ENCODE measurements at regions of chr11 and their contacts with region 1.

Region 1: DNA sequence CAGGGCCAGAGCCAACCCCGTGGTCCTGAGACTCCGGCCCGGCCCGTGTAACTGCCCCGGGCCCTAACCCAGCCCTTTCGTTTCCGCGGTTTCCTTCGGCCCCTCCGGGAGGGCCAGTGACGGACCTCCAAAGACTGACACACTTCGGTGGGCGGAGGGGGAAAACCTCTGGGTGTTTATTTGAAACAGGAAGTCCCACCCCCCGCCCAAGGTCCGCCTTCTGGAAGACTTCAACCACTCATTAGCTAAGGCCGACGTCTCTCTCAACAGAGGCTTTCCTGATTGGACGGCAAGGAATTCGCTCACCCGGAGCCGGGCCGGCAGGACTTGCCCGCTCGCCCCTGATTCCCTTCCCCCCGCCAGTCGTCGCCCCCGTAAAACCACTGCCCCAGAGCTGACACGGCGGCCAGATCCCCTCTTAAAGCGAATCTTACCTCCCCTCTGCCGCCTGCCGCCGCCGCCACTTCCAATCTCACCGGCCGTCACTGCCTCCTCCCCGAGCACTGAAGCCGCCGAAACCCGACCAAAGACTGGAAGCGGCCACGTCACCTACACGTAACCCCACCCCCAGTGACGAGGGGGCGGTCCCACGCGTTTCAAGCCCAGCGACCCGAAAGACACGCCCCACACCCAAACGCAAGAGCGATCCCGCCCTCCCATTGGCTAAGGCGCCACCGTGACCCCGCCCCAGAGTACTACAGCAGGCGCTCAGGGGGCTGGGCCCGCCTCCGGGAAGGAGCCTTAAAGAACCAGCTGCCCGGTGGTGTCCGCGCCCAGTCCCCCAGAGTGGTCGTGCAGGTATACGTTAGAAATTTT is at the start of gene STX5:
- DNase-seq: peak; percentile 94 to 99 (median 96)
- ATAC-seq: peak; percentile 94
- H3K4me3 ChIP-seq: peak within 1 kb of the TSS; percentile 94
- H3K27ac ChIP-seq: peak within 1 kb of the TSS; percentile 98
- H3K4me1 ChIP-seq: peaks cover 7 to 17% of the 10 kb centered on the region in 2 experiments; a peak in 4 of 5 replicates
- H3K27me3 ChIP-seq: no peaks in the 10 kb centered on the region
- CTCF ChIP-seq: no peak
- EP300 ChIP-seq: no peak
- POLR2A ChIP-seq: peak; percentile 92
- RAD21 ChIP-seq: no peak
- polyA plus RNA-seq, gene STX5: 2.8 to 3.6 TPM

Region 2: DNA sequence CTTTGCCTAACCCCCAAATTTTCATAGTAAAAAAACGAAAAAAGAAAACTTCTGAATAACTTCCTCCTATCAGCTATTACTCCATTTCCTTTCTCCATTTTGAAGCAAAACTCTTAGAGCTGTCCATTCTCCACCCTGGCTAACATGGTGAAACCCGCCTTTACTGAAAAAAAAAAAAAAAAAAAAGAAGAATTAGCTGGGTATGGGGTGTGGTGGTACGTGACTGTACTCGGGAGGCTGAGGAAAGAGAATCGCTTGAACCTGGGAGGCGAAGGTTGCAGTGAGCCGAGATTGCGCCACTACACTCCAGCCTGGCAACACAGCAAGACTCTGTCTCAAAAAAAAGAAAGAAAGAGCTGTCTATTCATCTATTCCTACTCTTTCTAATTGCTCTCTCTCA is 15.2 kb before region 1 on chr11:
- CTCF ChIA-PET with region 1: no interaction called
- POLR2A ChIA-PET with region 1: interaction called, 16 read pairs
- in situ Hi-C with region 1: no loop called
- intact Hi-C with region 1: no loop called
- DNase-seq: no peak
- ATAC-seq: no peak
- H3K4me3 ChIP-seq: no peak overlapping the region
- H3K27ac ChIP-seq: no peak overlapping the region
- H3K4me1 ChIP-seq: no peaks in the 10 kb centered on the region; a peak in 2 of 5 replicates
- H3K27me3 ChIP-seq: no peaks in the 10 kb centered on the region
- CTCF ChIP-seq: no peak
- EP300 ChIP-seq: no peak
- POLR2A ChIP-seq: no peak
- RAD21 ChIP-seq: no peak

Region 3: DNA sequence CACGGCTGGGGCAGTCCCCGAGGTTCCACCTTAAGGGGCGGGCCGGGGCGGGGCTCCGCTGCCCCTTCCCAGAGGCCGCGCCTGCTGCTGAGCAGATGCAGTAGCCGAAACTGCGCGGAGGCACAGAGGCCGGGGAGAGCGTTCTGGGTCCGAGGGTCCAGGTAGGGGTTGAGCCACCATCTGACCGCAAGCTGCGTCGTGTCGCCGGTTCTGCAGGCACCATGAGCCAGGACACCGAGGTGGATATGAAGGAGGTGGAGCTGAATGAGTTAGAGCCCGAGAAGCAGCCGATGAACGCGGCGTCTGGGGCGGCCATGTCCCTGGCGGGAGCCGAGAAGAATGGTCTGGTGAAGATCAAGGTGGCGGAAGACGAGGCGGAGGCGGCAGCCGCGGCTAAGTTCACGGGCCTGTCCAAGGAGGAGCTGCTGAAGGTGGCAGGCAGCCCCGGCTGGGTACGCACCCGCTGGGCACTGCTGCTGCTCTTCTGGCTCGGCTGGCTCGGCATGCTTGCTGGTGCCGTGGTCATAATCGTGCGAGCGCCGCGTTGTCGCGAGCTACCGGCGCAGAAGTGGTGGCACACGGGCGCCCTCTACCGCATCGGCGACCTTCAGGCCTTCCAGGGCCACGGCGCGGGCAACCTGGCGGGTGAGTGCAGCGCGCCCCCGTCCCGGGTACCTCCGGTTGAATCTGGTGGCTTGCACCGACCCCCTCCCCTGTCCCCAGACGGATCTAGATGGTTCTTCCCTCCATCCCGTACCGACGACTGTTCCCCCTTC is 49.3 kb after region 1 on chr11 and contains the start of gene SLC3A2:
- CTCF ChIA-PET with region 1: no interaction called
- POLR2A ChIA-PET with region 1: interaction called, 10 read pairs
- in situ Hi-C with region 1: no loop called
- intact Hi-C with region 1: no loop called
- DNase-seq: peak; percentile 83 to 95 (median 86)
- ATAC-seq: peak; percentile 88
- H3K4me3 ChIP-seq: peak within 1 kb of the TSS; percentile 56
- H3K27ac ChIP-seq: peak within 1 kb of the TSS; percentile 95
- H3K4me1 ChIP-seq: peaks cover 56 to 58% of the 10 kb centered on the region in 2 experiments
- H3K27me3 ChIP-seq: no peaks in the 10 kb centered on the region
- CTCF ChIP-seq: peak; percentile 72 to 80 (median 77)
- EP300 ChIP-seq: no peak
- POLR2A ChIP-seq: peak; percentile 99
- RAD21 ChIP-seq: peak; percentile 24 to 43; a peak in 2 of 4 replicates
- polyA plus RNA-seq, gene SLC3A2: 20.0 to 39.7 TPM

Measured in K562 (cell line).